Endothelial cell of umbilical vein (primary cell): ENCODE measurements at regions of chr1 and their contacts with region 1.

Region 1: DNA sequence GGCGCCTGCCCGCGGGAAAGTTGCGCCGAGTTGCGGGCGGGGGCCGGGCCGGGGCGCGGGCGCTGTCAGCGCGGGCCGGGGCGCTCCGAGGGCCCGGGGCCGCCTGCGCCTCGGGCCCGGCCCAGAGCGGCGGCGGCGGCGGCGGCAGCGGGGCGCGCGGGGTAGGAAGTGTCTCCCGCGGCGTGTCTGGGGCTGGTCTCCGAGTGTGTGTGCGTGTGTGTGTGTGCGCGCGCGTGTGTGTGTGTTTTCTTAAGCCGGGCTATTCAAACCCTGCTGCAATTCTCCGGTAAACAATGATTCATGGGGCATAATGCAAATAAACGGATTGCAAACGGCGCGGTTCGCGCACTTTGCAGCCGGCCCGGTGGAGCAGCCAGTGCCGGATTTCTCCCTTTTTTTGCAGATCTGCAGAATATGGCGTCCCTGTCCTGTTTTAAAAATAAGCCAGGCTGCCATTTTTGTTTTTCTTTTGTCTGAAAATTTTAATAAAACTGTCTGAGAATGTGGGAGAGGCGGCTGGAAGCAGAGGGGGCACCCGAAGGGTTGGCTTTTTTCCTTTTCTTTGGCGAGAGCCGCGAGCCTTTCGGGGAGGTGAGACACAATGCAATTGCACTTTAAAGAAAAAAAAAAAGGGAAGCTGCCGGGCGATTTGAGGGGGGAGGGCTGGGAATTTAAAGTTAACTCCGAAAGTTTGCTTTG is 558 bp downstream of the ZNF362 start:
- DNase-seq: peak; percentile 65
- H3K4me3 ChIP-seq: peak overlapping the region; percentile 79 to 88 (median 81)
- H3K27ac ChIP-seq: peak overlapping the region; percentile 76
- H3K4me1 ChIP-seq: peaks cover 12% of the 10 kb centered on the region
- H3K27me3 ChIP-seq: no peaks in the 10 kb centered on the region
- CTCF ChIP-seq: no peak
- POLR2A ChIP-seq: peak; percentile 17

Region 2: GRCh38 chr1:31705080-31705866 is 1551.6 kb before region 1 on chr1:
- CTCF ChIA-PET with region 1: no interaction called
- POLR2A ChIA-PET with region 1: no interaction called
- dilution Hi-C with region 1: no loop called
- intact Hi-C with region 1: no loop called
- DNase-seq: no peak
- H3K4me3 ChIP-seq: no peak overlapping the region
- H3K27ac ChIP-seq: no peak overlapping the region
- H3K4me1 ChIP-seq: peaks cover 9% of the 10 kb centered on the region
- H3K27me3 ChIP-seq: peaks cover 0 to 3% of the 10 kb centered on the region in 2 experiments
- CTCF ChIP-seq: peak; percentile 5 to 12
- POLR2A ChIP-seq: no peak

Region 3: DNA sequence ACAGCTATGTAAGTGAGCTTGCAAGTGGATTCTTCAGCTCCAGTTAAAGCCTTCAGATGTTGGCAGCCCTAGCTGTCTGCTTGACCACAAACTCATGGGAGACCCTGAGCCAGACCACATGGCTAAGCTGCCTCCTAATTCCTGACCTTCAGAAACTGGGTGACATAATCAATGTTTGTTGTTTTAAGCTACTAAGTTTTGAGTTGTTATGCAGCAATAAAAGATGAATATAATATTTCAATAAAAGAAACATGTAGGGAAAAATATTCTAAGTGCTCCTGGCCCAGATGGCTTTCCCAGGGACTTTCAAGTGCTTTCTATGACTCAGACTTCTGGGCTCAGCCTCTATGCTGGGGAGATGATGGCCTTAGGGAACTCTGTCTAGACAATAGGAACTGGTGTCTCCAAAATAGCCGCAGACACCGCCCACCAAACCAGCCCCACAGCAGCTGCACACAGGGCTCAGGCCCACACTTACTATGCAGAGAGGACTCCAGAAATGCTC is 196.2 kb before region 1 on chr1:
- CTCF ChIA-PET with region 1: no interaction called
- POLR2A ChIA-PET with region 1: no interaction called
- dilution Hi-C with region 1: no loop called
- intact Hi-C with region 1: no loop called
- DNase-seq: peak; percentile 28
- H3K4me3 ChIP-seq: no peak overlapping the region
- H3K27ac ChIP-seq: no peak overlapping the region
- H3K4me1 ChIP-seq: no peaks in the 10 kb centered on the region
- H3K27me3 ChIP-seq: no peaks in the 10 kb centered on the region
- CTCF ChIP-seq: no peak
- POLR2A ChIP-seq: no peak

Region 4: GRCh38 chr1:33161061-33161681 is 95.7 kb before region 1 on chr1:
- CTCF ChIA-PET with region 1: no interaction called
- POLR2A ChIA-PET with region 1: no interaction called
- dilution Hi-C with region 1: no loop called
- intact Hi-C with region 1: loop called (anchors 5 kb)
- DNase-seq: peak; percentile 66
- H3K4me3 ChIP-seq: no peak overlapping the region
- H3K27ac ChIP-seq: no peak overlapping the region
- H3K4me1 ChIP-seq: peaks cover 22% of the 10 kb centered on the region
- H3K27me3 ChIP-seq: no peaks in the 10 kb centered on the region
- CTCF ChIP-seq: no peak
- POLR2A ChIP-seq: no peak

Region 5: GRCh38 chr1:33219881-33220661 is 36.8 kb before region 1 on chr1:
- CTCF ChIA-PET with region 1: interaction called, 4 read pairs
- POLR2A ChIA-PET with region 1: no interaction called
- dilution Hi-C with region 1: no loop called
- intact Hi-C with region 1: loop called (anchors 2 kb)
- DNase-seq: no peak
- H3K4me3 ChIP-seq: no peak overlapping the region
- H3K27ac ChIP-seq: no peak overlapping the region
- H3K4me1 ChIP-seq: peaks cover 5% of the 10 kb centered on the region
- H3K27me3 ChIP-seq: peaks cover 3 to 12% of the 10 kb centered on the region in 2 experiments
- CTCF ChIP-seq: no peak
- POLR2A ChIP-seq: no peak